ENCODE measurements at regions of chr17 and their contacts with region 1.

Region 1: GRCh38 chr17:44350733-44351226 is 5.7 kb downstream of the GRN start:
- DNase-seq: no peak
- H3K4me3 ChIP-seq: no peak overlapping the region
- H3K27ac ChIP-seq: no peak overlapping the region
- H3K4me1 ChIP-seq: no peaks in the 10 kb centered on the region
- H3K27me3 ChIP-seq: no peaks in the 10 kb centered on the region
- CTCF ChIP-seq: peak in 2 of 3 donors; percentile 56 to 70
- POLR2A ChIP-seq: no peak

Region 2: GRCh38 chr17:44829523-44830358 is 479.0 kb after region 1 on chr17 and contains the start of gene GJC1:
- intact Hi-C with region 1: no loop called
- DNase-seq: no peak
- H3K4me3 ChIP-seq: peak within 1 kb of the TSS; percentile 51 to 76 (median 57)
- H3K27ac ChIP-seq: peak within 1 kb of the TSS; percentile 41 to 78
- H3K4me1 ChIP-seq: peaks cover 0 to 4% of the 10 kb centered on the region in 2 donors
- H3K27me3 ChIP-seq: peaks cover 9 to 64% of the 10 kb centered on the region in 2 donors
- CTCF ChIP-seq: no peak
- POLR2A ChIP-seq: no peak
- total RNA-seq, gene GJC1: 2.3 to 4.6 (median 4.3) TPM

Region 3: DNA sequence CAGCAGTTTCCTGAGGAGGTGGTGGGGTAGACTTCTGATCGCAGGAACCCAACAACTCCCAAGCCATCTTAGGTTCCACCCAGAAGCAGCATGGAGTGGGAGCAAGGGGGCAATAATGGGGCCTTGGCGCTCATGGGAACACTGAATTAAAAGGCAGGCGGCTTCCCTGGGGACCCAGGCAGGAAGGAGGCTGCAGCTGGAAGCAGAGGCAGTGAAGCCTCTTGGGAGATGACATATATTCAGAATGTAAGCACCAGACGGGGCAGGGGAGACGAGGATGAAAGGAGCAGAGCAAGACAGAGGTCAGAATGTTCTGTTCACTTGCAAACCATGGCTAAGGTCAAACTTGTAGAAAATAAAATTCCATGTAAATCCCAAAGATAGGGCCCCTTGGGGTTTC is 499.8 kb after region 1 on chr17:
- intact Hi-C with region 1: loop called (anchors 5 kb)
- DNase-seq: no peak
- H3K4me3 ChIP-seq: no peak overlapping the region
- H3K27ac ChIP-seq: peak overlapping the region in 1 of 2 donors; percentile 25
- H3K4me1 ChIP-seq: no peaks in the 10 kb centered on the region
- H3K27me3 ChIP-seq: no peaks in the 10 kb centered on the region
- CTCF ChIP-seq: no peak
- POLR2A ChIP-seq: no peak

Measured in breast epithelium (tissue), 4 donors.